Activated CD8-positive, alpha-beta T cell treated with anti-CD3 and anti-CD28 coated beads for 36 hours (primary cell): ENCODE measurements at regions of chr15 and their contacts with region 1.

Region 1: GRCh38 chr15:52780172-52780980 is 9.8 kb downstream of the ONECUT1 start:
- DNase-seq: peak; percentile 80
- ATAC-seq: peak; percentile 72
- H3K4me3 Mint-ChIP-seq: peak overlapping the region; percentile 22
- H3K27ac Mint-ChIP-seq: no peak overlapping the region
- H3K4me1 Mint-ChIP-seq: peaks cover 18% of the 10 kb centered on the region
- H3K27me3 Mint-ChIP-seq: peaks cover 61% of the 10 kb centered on the region
- CTCF ChIP-seq: peak; percentile 91

Region 2: GRCh38 chr15:52331490-52332240 is 448.7 kb before region 1 on chr15:
- CTCF ChIA-PET with region 1: no interaction called
- POLR2A ChIA-PET with region 1: no interaction called
- intact Hi-C with region 1: no loop called
- DNase-seq: peak; percentile 75
- ATAC-seq: peak; percentile 99
- H3K4me3 Mint-ChIP-seq: no peak overlapping the region
- H3K27ac Mint-ChIP-seq: peak overlapping the region; percentile 74
- H3K4me1 Mint-ChIP-seq: peaks cover 20% of the 10 kb centered on the region
- H3K27me3 Mint-ChIP-seq: no peaks in the 10 kb centered on the region
- CTCF ChIP-seq: peak; percentile 71

Region 3: GRCh38 chr15:52822475-52822874 is 42.1 kb after region 1 on chr15:
- CTCF ChIA-PET with region 1: no interaction called
- POLR2A ChIA-PET with region 1: no interaction called
- intact Hi-C with region 1: no loop called
- DNase-seq: no peak
- ATAC-seq: no peak
- H3K4me3 Mint-ChIP-seq: no peak overlapping the region
- H3K27ac Mint-ChIP-seq: no peak overlapping the region
- H3K4me1 Mint-ChIP-seq: no peaks in the 10 kb centered on the region
- H3K27me3 Mint-ChIP-seq: peaks cover 53% of the 10 kb centered on the region
- CTCF ChIP-seq: no peak

Region 4: DNA sequence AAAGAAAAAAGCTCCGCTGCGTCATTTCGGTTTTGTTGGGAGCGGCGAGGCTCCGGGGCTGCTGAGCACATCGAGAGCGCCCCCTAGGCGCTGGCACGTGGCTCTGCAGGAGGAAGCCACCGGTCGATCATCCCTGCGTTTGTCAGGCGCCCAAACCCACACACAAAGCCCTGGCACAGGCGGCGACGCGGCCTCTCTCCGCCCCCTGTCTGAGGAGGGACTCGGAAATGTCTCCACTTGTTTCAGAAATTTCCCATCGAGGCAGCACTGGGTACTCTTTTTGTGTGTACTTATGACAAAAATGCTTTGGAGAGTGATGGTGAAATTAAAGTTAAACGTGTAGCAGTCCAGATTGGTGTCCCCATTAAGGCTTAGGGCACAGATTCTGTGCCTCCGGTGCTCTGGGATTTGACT is 417.1 kb after region 1 on chr15:
- CTCF ChIA-PET with region 1: interaction called, 3 read pairs
- POLR2A ChIA-PET with region 1: no interaction called
- intact Hi-C with region 1: loop called (anchors 5 kb)
- DNase-seq: peak; percentile 65
- ATAC-seq: peak; percentile 77
- H3K4me3 Mint-ChIP-seq: no peak overlapping the region
- H3K27ac Mint-ChIP-seq: no peak overlapping the region
- H3K4me1 Mint-ChIP-seq: peaks cover 3% of the 10 kb centered on the region
- H3K27me3 Mint-ChIP-seq: peaks cover 15% of the 10 kb centered on the region
- CTCF ChIP-seq: peak; percentile 88